ENCODE measurements at regions of chr7 and their contacts with region 1.

Region 1: GRCh38 chr7:103947026-103947655 is 42.3 kb downstream of the RELN start:
- DNase-seq: no peak
- ATAC-seq: no peak
- H3K4me3 ChIP-seq: no peak overlapping the region
- H3K27ac ChIP-seq: no peak overlapping the region
- H3K4me1 ChIP-seq: no peaks in the 10 kb centered on the region
- H3K27me3 ChIP-seq: no peaks in the 10 kb centered on the region

Region 2: DNA sequence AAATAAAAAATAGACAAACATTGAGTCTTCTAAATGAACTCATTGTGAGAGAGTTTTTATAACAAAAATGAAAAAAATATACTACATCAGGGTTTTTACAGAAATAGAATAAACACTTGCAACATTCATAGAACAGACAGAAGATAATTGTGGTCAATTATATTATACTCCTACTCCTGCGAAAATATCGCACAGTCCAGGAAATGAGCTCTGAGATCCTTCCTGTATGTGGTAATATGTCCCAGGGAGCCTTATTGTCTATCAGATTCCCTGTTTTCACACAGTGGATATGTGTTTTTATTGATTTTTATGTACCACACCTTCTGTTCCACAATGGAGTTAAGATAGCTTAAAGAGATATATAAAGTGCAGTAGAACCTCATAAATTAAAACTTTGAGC is 69.9 kb after region 1 on chr7:
- intact Hi-C with region 1: loop called in 1 of 4 experiments (anchors 10 kb)
- DNase-seq: no peak
- ATAC-seq: no peak
- H3K4me3 ChIP-seq: no peak overlapping the region
- H3K27ac ChIP-seq: no peak overlapping the region
- H3K4me1 ChIP-seq: no peaks in the 10 kb centered on the region
- H3K27me3 ChIP-seq: no peaks in the 10 kb centered on the region

Region 3: GRCh38 chr7:104096683-104097082 is 149.5 kb after region 1 on chr7:
- intact Hi-C with region 1: no loop called
- DNase-seq: no peak
- ATAC-seq: no peak
- H3K4me3 ChIP-seq: no peak overlapping the region
- H3K27ac ChIP-seq: no peak overlapping the region
- H3K4me1 ChIP-seq: no peaks in the 10 kb centered on the region
- H3K27me3 ChIP-seq: no peaks in the 10 kb centered on the region

Region 4: DNA sequence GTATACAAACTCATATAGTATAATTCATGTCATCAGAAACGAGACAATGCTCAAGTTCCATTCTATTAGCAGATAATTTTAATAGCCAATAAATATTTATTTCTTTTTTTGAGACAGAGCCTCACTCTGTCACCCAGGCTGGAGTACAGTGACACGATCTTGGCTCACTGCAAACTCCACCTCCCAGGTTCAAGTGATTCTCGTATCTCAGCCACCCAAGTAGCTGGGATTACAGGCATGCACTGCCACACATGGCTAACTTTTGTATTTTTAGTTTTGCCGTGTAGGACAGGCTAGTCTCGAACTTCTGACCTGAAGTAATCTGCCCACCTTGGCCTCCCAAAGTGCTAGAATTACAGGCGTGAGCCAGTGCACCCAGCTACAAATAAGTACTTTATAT is 214.9 kb after region 1 on chr7:
- intact Hi-C with region 1: no loop called
- DNase-seq: no peak
- ATAC-seq: no peak
- H3K4me3 ChIP-seq: no peak overlapping the region
- H3K27ac ChIP-seq: no peak overlapping the region
- H3K4me1 ChIP-seq: no peaks in the 10 kb centered on the region
- H3K27me3 ChIP-seq: no peaks in the 10 kb centered on the region

Region 5: DNA sequence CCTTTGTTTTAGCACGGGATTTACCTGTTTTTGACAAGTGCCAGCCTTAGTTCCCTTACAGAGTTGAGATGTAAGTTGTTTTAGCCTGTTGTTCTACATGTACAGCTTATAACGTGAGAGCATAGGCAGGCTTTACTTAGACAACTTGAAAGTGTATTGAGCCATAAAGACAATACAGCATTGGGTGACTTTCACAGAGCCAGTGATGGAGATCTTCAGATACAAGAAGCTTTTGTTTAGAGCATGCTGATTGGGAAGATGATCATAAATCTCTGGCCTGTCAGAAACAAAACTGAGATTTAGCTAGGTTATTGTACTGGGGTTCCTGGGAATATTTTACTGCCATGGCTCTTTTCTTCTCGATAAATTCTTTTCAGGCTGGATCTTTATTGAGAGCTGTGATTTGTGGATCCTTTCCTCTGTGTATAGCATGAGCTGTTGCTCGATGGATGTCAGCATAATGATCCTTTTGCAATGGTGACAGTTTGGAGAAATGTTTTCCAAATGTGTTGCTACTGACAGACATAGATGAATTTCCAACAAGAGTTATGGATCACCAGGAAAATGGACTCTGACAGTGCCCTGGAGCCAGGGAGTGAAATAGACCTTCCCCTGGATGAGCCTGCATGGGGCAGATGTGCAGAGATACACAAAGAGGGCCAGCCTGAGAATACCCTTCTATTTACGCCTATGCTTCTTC is 411.5 kb after region 1 on chr7:
- intact Hi-C with region 1: loop called in 1 of 4 experiments (anchors 10 kb)
- DNase-seq: no peak
- ATAC-seq: no peak
- H3K4me3 ChIP-seq: no peak overlapping the region
- H3K27ac ChIP-seq: no peak overlapping the region
- H3K4me1 ChIP-seq: no peaks in the 10 kb centered on the region
- H3K27me3 ChIP-seq: no peaks in the 10 kb centered on the region